ENCODE measurements at regions of chr7 and their contacts with region 1.

Region 1: DNA sequence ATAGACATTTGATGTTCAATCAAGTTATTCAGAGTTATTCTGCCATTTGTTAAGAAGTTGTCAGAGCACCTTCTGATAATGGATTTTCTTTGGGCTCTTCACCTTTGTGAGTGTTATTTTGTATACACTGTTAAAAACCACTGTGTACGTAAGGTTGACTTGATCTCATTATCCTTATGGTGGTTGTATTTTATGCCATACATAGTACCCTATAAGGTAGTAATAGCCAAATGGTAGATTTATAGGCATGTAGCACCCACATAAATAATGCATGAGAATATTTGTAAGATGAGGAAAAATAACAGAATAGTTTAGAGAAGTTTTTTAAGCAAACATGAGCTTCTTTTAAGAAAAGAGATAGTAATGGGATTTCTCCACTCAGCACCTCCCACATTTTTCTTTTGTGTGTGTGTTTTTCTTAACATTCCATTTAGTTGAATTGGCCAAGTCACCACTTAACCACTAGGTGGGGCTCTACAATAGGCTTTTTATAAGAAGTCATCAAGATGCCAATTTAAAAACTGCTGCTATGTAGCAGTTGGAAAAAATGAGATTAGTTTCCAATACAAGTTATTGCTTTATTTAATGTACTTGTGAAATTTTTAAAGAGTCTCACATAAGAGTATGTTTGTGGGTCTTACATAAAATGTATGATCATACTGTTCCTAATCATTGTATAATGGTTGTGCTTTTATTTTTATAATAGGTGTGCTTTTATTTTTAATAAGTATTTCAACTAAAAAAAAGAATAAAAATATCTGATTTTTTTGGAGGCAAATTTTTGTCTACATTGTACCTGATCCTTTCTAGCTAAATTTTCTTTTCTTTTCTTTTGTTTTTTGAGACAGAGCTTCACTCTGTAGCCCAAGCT is 41.1 kb upstream of the STMP1 start:
- DNase-seq: peak; percentile 91
- ATAC-seq: peak; percentile 95
- H3K4me3 ChIP-seq: no peak overlapping the region
- H3K27ac ChIP-seq: peak overlapping the region; percentile 56; the same call in 1 of the 2 replicates
- H3K4me1 ChIP-seq: no peaks in the 10 kb centered on the region
- H3K27me3 ChIP-seq: no peaks in the 10 kb centered on the region
- CTCF ChIP-seq: peak; percentile 93
- POLR2A ChIP-seq: no peak
- RAD21 ChIP-seq: peak; percentile 76

Region 2: DNA sequence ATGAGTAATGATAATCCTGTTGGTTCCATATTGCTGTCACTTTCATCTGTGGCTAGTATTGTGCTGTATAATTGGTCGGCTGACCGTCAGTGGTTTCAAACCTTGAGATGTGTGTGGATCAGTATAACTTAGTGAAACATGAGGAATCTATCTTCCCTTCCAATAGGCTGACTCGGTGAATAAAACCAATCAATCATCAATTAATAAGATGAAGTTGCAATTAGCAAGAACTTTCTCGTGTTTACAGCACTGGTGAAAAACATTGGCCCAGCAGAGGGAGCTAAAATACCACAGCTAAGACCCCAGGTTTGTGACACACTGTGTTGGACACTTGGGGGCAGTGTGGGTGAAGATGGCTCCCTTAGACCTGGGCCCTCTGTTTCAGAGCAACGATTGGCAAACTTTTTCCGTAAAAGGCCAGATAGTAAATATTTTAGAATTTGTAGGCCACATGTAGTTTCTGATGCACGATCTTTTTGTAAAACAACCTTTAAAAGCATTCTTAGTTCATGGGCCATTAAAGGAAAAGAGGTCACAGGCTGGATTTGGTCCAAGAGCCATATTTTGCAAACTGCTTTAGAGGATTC is 339.8 kb before region 1 on chr7:
- CTCF ChIA-PET with region 1: no interaction called
- POLR2A ChIA-PET with region 1: no interaction called
- dilution Hi-C with region 1: no loop called
- in situ Hi-C with region 1: no loop called
- intact Hi-C with region 1: loop called (anchors 1 kb)
- DNase-seq: peak; percentile 87
- ATAC-seq: peak; percentile 100
- H3K4me3 ChIP-seq: no peak overlapping the region
- H3K27ac ChIP-seq: no peak overlapping the region
- H3K4me1 ChIP-seq: no peaks in the 10 kb centered on the region
- H3K27me3 ChIP-seq: no peaks in the 10 kb centered on the region; the same call in 1 of the 2 replicates
- CTCF ChIP-seq: peak; percentile 100
- POLR2A ChIP-seq: 0 out of 2 replicates have a peak, but pooled peaks have one; percentile 47
- RAD21 ChIP-seq: peak; percentile 98

Region 3: GRCh38 chr7:135375908-135376699 is 245.1 kb before region 1 on chr7:
- CTCF ChIA-PET with region 1: no interaction called
- POLR2A ChIA-PET with region 1: no interaction called
- dilution Hi-C with region 1: no loop called
- in situ Hi-C with region 1: no loop called
- intact Hi-C with region 1: no loop called
- DNase-seq: no peak
- ATAC-seq: no peak
- H3K4me3 ChIP-seq: no peak overlapping the region
- H3K27ac ChIP-seq: no peak overlapping the region
- H3K4me1 ChIP-seq: no peaks in the 10 kb centered on the region
- H3K27me3 ChIP-seq: no peaks in the 10 kb centered on the region
- CTCF ChIP-seq: no peak
- POLR2A ChIP-seq: no peak
- RAD21 ChIP-seq: no peak

Region 4: GRCh38 chr7:135509903-135510602 is 111.2 kb before region 1 on chr7 and contains the start of gene CNOT4:
- CTCF ChIA-PET with region 1: no interaction called
- POLR2A ChIA-PET with region 1: no interaction called
- dilution Hi-C with region 1: no loop called
- in situ Hi-C with region 1: no loop called
- intact Hi-C with region 1: loop called (anchors 2 kb)
- DNase-seq: peak; percentile 92
- ATAC-seq: peak; percentile 97
- H3K4me3 ChIP-seq: peak within 1 kb of the TSS; percentile 92
- H3K27ac ChIP-seq: peak within 1 kb of the TSS; percentile 96
- H3K4me1 ChIP-seq: no peaks in the 10 kb centered on the region
- H3K27me3 ChIP-seq: no peaks in the 10 kb centered on the region
- CTCF ChIP-seq: no peak
- POLR2A ChIP-seq: peak; percentile 93
- RAD21 ChIP-seq: no peak
- total RNA-seq, gene CNOT4: 8.1 and 10.0 TPM in 2 replicates

Region 5: GRCh38 chr7:135645296-135645904 is 24.2 kb after region 1 on chr7:
- CTCF ChIA-PET with region 1: interaction called, 13 read pairs
- POLR2A ChIA-PET with region 1: no interaction called
- dilution Hi-C with region 1: no loop called
- in situ Hi-C with region 1: no loop called
- intact Hi-C with region 1: loop called (anchors 2 kb)
- DNase-seq: peak; percentile 64
- ATAC-seq: peak; percentile 96
- H3K4me3 ChIP-seq: no peak overlapping the region
- H3K27ac ChIP-seq: no peak overlapping the region
- H3K4me1 ChIP-seq: no peaks in the 10 kb centered on the region
- H3K27me3 ChIP-seq: no peaks in the 10 kb centered on the region
- CTCF ChIP-seq: peak; percentile 79
- POLR2A ChIP-seq: no peak
- RAD21 ChIP-seq: peak; percentile 69

Region 6: GRCh38 chr7:135662373-135663114 is 41.3 kb after region 1 on chr7 and contains the start of gene STMP1:
- CTCF ChIA-PET with region 1: no interaction called
- POLR2A ChIA-PET with region 1: interaction called, 3 read pairs
- dilution Hi-C with region 1: no loop called
- in situ Hi-C with region 1: no loop called
- intact Hi-C with region 1: loop called (anchors 5 kb)
- DNase-seq: peak; percentile 96
- ATAC-seq: peak; percentile 93
- H3K4me3 ChIP-seq: peak within 1 kb of the TSS; percentile 84
- H3K27ac ChIP-seq: peak within 1 kb of the TSS; percentile 100
- H3K4me1 ChIP-seq: peaks cover 9% of the 10 kb centered on the region
- H3K27me3 ChIP-seq: no peaks in the 10 kb centered on the region
- CTCF ChIP-seq: peak; percentile 80
- POLR2A ChIP-seq: peak; percentile 94
- RAD21 ChIP-seq: peak; percentile 68
- total RNA-seq, gene STMP1: 6.1 and 11.9 TPM in 2 replicates

Region 7: DNA sequence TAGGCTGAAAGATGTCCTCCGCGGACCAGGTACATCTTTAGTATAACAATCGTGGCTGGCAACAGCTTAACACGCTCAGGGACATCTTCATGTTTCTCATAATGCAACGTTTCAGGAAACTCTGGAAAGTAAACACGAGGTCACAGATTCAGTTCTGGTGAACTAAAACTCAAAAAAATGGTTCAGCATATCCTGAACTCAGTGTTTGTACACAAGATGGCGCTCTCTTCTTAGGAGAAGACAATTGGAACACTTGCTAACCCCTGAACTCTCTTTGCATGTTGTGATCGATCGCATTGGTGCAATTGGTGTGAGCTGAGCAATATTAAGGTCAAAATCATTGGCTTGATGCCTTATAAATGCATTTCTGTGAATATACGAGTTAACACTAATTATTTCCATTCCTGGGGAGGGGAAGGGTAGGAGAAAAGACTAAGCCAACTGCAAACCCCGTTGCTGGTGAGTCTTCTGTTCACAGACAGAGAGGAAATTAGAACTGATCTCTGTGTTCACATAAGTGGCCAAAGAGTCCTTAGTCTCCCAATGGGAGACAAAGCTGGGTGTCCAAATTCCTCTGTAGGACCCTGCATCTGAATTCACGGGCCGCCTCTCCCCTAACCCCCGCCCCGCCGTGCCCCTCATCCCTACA is 180.0 kb after region 1 on chr7:
- CTCF ChIA-PET with region 1: interaction called, 4 read pairs
- POLR2A ChIA-PET with region 1: no interaction called
- dilution Hi-C with region 1: no loop called
- in situ Hi-C with region 1: no loop called
- intact Hi-C with region 1: loop called (anchors 1 kb)
- DNase-seq: peak; percentile 74
- ATAC-seq: peak; percentile 81
- H3K4me3 ChIP-seq: no peak overlapping the region
- H3K27ac ChIP-seq: no peak overlapping the region
- H3K4me1 ChIP-seq: peaks cover 2% of the 10 kb centered on the region; the same call in 1 of the 2 replicates
- H3K27me3 ChIP-seq: no peaks in the 10 kb centered on the region
- CTCF ChIP-seq: peak; percentile 90
- POLR2A ChIP-seq: no peak
- RAD21 ChIP-seq: peak; percentile 97

Region 8: GRCh38 chr7:136009488-136010079 is 388.4 kb after region 1 on chr7:
- CTCF ChIA-PET with region 1: no interaction called
- POLR2A ChIA-PET with region 1: no interaction called
- dilution Hi-C with region 1: no loop called
- in situ Hi-C with region 1: no loop called
- intact Hi-C with region 1: loop called (anchors 2 kb)
- DNase-seq: peak; percentile 58
- ATAC-seq: peak; percentile 79
- H3K4me3 ChIP-seq: no peak overlapping the region
- H3K27ac ChIP-seq: no peak overlapping the region
- H3K4me1 ChIP-seq: no peaks in the 10 kb centered on the region
- H3K27me3 ChIP-seq: no peaks in the 10 kb centered on the region; the same call in 1 of the 2 replicates
- CTCF ChIP-seq: peak; percentile 79
- POLR2A ChIP-seq: no peak
- RAD21 ChIP-seq: peak; percentile 85

Measured in IMR-90 (cell line).